Ovary (tissue), 10 donors: ENCODE measurements at regions of chr7 and their contacts with region 1.

Region 1: GRCh38 chr7:47239931-47240421 is 341.9 kb downstream of the TNS3 start:
- DNase-seq: peak in 3 of 5 donors; percentile 41 to 52 (median 48)
- H3K4me3 ChIP-seq: no peak overlapping the region
- H3K27ac ChIP-seq: peak overlapping the region in 1 of 2 donors; percentile 70
- H3K4me1 ChIP-seq: peaks cover 23% of the 10 kb centered on the region
- H3K27me3 ChIP-seq: no peaks in the 10 kb centered on the region
- CTCF ChIP-seq: no peak
- EP300 ChIP-seq: no peak
- POLR2A ChIP-seq: no peak

Region 2: DNA sequence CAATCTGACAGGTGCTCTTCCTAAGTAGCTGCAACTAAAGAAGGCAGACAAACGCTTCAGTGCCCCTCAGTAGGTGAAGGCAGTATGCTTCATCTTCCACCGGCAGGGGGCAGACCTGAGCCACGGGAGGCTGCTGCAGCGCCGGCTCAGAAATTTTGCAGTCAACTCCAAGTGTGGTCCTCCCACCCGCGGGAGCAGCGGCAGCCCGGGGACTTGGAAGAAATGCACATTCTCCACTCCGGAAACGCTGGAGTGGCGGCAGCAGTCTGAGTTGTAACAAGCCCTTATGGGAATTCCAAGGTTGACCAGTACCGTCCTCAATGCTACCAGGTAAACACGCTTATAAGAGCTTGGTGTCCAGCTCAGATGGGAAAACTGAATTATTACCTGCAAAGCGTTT is 1322.3 kb before region 1 on chr7:
- intact Hi-C with region 1: loop called in 2 of 4 experiments (anchors 10 kb)
- DNase-seq: peak; percentile 77 to 88 (median 87)
- H3K4me3 ChIP-seq: peak overlapping the region; percentile 78
- H3K27ac ChIP-seq: no peak overlapping the region
- H3K4me1 ChIP-seq: peaks cover 4% of the 10 kb centered on the region
- H3K27me3 ChIP-seq: no peaks in the 10 kb centered on the region
- CTCF ChIP-seq: peak; percentile 80 to 87 (median 85)
- EP300 ChIP-seq: no peak
- POLR2A ChIP-seq: no peak

Region 3: DNA sequence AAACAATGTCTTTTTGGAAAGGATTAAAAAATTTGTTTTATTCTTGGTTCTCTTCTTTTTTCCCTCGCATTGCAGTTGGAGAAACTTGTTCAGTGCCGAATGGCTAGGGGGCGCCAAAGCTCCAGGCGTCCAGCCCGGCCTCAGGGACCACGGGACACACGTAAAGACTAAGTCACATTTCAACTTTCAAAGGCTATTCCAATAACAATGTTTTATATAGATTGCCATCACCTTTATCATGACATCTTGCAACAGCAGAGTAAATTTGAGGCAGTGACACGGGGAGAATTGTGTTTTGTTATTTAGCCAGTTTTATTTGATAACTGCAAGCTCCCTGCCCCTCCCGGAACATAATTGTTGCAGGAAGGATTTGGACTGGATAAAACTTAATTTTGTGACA is 1316.7 kb before region 1 on chr7:
- intact Hi-C with region 1: loop called in 2 of 4 experiments (anchors 10 kb)
- DNase-seq: peak; percentile 66 to 83 (median 81)
- H3K4me3 ChIP-seq: no peak overlapping the region
- H3K27ac ChIP-seq: no peak overlapping the region
- H3K4me1 ChIP-seq: peaks cover 4% of the 10 kb centered on the region
- H3K27me3 ChIP-seq: no peaks in the 10 kb centered on the region
- CTCF ChIP-seq: peak; percentile 53 to 80 (median 76)
- EP300 ChIP-seq: no peak
- POLR2A ChIP-seq: no peak

Region 4: DNA sequence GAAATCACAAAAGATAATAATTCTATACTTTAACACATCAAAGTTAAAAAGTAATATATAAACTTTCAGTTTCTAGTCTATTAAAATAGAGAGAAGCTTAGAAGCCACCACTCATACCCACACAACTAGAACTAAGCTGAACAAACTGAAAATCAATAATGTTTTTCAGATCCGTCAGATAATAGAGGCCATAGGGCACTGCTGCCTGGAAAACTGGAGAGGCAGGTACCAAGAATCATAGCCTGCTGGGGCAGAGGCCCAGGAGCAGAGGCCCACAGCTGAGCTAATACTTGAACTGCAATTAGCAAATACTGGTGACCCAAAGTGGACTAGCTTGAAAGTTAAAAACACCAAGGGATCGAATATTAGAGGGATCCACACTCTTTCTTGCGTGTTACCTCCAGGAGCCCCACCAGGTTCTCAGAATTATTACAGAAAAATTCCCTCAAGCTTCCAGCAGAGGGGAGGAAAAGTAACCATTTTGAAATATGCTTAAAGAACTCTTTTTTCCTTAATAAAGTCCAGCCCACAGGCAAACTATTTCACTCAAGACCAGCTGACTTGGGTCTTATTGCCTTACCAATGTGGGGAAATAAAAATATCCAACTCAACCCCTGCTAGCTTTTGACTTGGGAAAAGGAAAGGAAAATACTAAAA is 544.8 kb before region 1 on chr7:
- intact Hi-C with region 1: no loop called
- DNase-seq: no peak
- H3K4me3 ChIP-seq: no peak overlapping the region
- H3K27ac ChIP-seq: no peak overlapping the region
- H3K4me1 ChIP-seq: no peaks in the 10 kb centered on the region
- H3K27me3 ChIP-seq: no peaks in the 10 kb centered on the region
- CTCF ChIP-seq: no peak
- EP300 ChIP-seq: no peak
- POLR2A ChIP-seq: no peak

Region 5: DNA sequence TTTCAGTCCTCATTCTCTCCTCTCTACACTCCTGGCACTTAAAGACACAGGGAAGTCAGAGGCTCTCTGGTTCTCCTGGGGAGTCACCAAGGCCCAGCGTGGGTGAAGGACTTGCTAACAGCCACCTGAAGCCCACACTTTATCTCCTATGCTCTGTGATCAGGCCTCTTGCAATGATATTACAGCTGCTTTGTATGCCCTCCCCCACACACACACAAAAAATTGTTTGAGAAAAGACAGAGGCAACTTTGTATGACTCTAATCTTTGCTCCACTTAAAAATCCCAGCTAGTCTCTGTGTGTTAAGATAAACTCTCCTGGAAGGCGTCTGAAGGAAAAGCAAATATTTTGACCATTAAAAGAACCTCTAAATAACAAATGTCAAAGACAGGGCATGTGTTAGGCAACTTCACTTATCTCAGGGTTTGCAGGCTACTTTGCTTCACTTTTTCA is 165.2 kb before region 1 on chr7:
- intact Hi-C with region 1: loop called in 1 of 4 experiments (anchors 10 kb)
- DNase-seq: peak in 3 of 5 donors; percentile 24 to 34 (median 32)
- H3K4me3 ChIP-seq: no peak overlapping the region
- H3K27ac ChIP-seq: no peak overlapping the region
- H3K4me1 ChIP-seq: peaks cover 5% of the 10 kb centered on the region
- H3K27me3 ChIP-seq: no peaks in the 10 kb centered on the region
- CTCF ChIP-seq: no peak
- EP300 ChIP-seq: no peak
- POLR2A ChIP-seq: no peak

Region 6: GRCh38 chr7:47179812-47180515 is 60.0 kb before region 1 on chr7:
- intact Hi-C with region 1: loop called in 1 of 4 experiments (anchors 10 kb)
- DNase-seq: peak; percentile 55 to 75 (median 63)
- H3K4me3 ChIP-seq: no peak overlapping the region
- H3K27ac ChIP-seq: no peak overlapping the region
- H3K4me1 ChIP-seq: peaks cover 7% of the 10 kb centered on the region
- H3K27me3 ChIP-seq: no peaks in the 10 kb centered on the region
- CTCF ChIP-seq: peak; percentile 67 to 78 (median 76)
- EP300 ChIP-seq: no peak
- POLR2A ChIP-seq: no peak